Activated T-helper 2 cell treated with anti-CD3 and anti-CD28 coated beads, Interferon-gamma antibody, Interleukin-2, Interleukin-4, amounts not matched to agents 10 μg/mL and 5 μg/mL and 100 μg/mL, durations not matched to agents 14 hours and 24 hours and 36 hours (primary cell): ENCODE measurements at regions of chr3 and their contacts with region 1.

Region 1: GRCh38 chr3:111577794-111578685 is 17.1 kb downstream of the ZBED2 start:
- DNase-seq: no peak
- H3K4me3 Mint-ChIP-seq: no peak overlapping the region
- H3K27ac Mint-ChIP-seq: peak overlapping the region; percentile 46
- H3K4me1 Mint-ChIP-seq: peaks cover 65% of the 10 kb centered on the region
- H3K27me3 Mint-ChIP-seq: no peaks in the 10 kb centered on the region

Region 2: GRCh38 chr3:111547631-111548030 is 30.4 kb before region 1 on chr3:
- intact Hi-C with region 1: loop called (anchors 1 kb)
- DNase-seq: peak; percentile 40
- H3K4me3 Mint-ChIP-seq: no peak overlapping the region
- H3K27ac Mint-ChIP-seq: no peak overlapping the region
- H3K4me1 Mint-ChIP-seq: peaks cover 40% of the 10 kb centered on the region
- H3K27me3 Mint-ChIP-seq: no peaks in the 10 kb centered on the region

Region 3: DNA sequence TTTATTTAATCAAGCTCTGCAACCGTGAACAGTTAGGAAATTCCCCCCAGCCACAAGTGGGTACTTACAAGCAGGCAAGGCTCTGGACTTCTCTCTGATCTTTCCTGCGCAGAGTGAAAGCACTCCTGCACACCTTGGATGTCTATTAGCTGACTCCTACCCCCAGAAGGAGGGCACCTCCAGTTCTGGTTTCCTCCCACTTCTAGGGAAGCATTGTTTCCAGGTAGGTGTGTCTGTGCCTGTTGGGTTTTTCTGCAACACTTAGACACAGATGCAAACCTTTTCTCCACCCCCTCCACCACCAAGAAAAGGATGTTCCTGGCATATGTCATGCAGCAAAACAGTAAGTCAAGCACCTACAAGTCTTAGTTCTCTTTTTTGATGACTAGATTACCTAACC is 17.2 kb after region 1 on chr3 and contains the start of gene ZBED2:
- intact Hi-C with region 1: loop called (anchors 1 kb)
- DNase-seq: no peak
- H3K4me3 Mint-ChIP-seq: peak within 1 kb of the TSS; percentile 97
- H3K27ac Mint-ChIP-seq: peak within 1 kb of the TSS; percentile 95
- H3K4me1 Mint-ChIP-seq: peaks cover 53% of the 10 kb centered on the region
- H3K27me3 Mint-ChIP-seq: no peaks in the 10 kb centered on the region
- total RNA-seq, gene ZBED2: 543 and 546 TPM in 2 replicates

Region 4: GRCh38 chr3:111604119-111604518 is 26.1 kb after region 1 on chr3:
- intact Hi-C with region 1: loop called (anchors 1 kb)
- DNase-seq: no peak
- H3K4me3 Mint-ChIP-seq: peak overlapping the region; percentile 22
- H3K27ac Mint-ChIP-seq: peak overlapping the region; percentile 85
- H3K4me1 Mint-ChIP-seq: peaks cover 81% of the 10 kb centered on the region
- H3K27me3 Mint-ChIP-seq: no peaks in the 10 kb centered on the region

Region 5: GRCh38 chr3:111967651-111968274 is 389.7 kb after region 1 on chr3:
- intact Hi-C with region 1: loop called (anchors 2 kb)
- DNase-seq: peak; percentile 67
- H3K4me3 Mint-ChIP-seq: no peak overlapping the region
- H3K27ac Mint-ChIP-seq: no peak overlapping the region
- H3K4me1 Mint-ChIP-seq: peaks cover 17% of the 10 kb centered on the region
- H3K27me3 Mint-ChIP-seq: peaks cover 6% of the 10 kb centered on the region